ENCODE measurements at regions of chr9 and their contacts with region 1.

Region 1: GRCh38 chr9:121545875-121546423 is 46.3 kb upstream of the GGTA1 start:
- DNase-seq: peak; percentile 95
- H3K27ac ChIP-seq: no peak overlapping the region; the same call in 1 of the 2 replicates
- CTCF ChIP-seq: peak; percentile 100

Region 2: DNA sequence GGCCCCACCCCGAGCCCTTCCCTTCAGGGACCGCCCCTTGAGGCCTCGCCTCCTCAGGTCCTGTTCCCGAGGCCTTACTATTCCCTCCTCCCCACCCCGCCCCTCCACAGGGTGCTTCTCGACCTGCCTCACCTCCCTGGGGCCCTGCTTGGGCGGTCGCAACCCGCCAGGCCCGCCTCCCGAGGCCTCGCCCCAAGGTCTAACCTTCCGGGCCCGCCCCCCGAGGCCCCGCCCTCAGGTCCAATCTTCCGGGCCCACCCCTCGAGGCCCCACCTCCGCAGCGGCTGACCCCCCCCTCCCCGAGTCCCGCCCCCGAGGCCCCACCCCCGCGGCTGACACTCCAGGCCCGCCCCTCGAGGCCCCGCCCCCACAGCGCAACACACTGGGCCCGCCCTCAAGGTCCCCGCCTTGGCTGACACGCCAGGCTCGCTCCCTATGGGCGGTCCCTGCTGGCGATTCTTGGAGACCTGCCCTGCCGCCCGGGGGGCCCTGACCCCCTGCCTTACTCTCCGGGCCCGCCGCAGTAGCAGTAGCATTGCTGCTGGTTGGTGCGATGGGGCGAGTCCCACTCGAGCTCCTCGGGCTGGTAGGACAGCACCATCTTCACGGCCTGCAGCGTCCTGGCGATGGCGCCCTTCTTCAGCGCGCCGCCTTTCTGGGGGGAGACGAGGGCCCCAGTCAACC is 677.1 kb before region 1 on chr9:
- CTCF ChIA-PET with region 1: no interaction called
- POLR2A ChIA-PET with region 1: no interaction called
- DNase-seq: peak; percentile 99
- H3K27ac ChIP-seq: peak overlapping the region; percentile 84
- CTCF ChIP-seq: peak; percentile 69

Region 3: DNA sequence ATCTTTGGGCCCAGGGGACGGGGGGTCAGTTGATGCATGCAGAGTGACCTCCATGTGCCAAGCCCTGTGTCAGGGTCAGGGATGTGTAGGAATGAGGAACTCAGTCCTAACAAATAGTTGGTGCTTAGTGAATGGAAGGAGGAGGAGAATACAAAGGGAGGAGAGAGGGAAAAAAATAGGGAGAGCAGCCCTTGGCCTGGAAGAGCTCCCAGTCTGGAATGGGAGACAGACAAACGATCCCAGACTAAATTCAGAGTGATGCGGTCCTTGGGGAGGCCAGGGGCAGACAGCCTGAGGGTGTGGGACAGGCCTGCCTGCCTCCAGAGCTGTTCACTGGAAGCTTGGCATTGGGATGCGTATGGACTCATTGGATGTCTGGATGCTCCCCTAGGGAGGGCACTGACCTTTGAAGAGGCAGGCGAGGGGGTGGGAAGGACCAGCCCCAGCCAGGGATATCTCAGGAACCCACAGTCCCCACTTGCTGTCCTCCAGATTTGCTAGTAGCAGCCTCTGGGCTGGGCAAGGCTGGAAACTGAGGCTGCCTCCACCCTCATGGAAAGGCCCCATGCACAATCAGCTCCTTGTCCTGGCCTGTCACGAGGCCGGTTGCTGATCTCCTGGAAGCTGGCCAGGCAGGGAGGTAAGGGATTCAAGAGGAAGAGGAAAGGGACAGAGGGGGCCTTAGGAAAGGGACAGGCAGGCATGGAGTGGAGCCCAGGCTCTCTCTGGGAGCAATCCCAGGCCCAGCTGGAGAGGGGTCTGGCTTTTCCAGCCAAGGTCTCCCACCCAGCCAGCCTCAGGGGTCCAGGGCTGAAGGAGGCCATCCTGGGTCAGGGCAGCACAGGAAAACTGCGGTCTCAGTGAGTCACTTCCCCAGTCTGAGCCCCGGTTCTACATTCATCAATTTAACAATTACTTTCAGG is 22.7 kb after region 1 on chr9:
- CTCF ChIA-PET with region 1: interaction called, 26 read pairs
- POLR2A ChIA-PET with region 1: no interaction called
- DNase-seq: peak; percentile 55
- H3K27ac ChIP-seq: peak overlapping the region; percentile 53
- CTCF ChIP-seq: no peak

Region 4: GRCh38 chr9:121581786-121582600 is 36.0 kb after region 1 on chr9:
- CTCF ChIA-PET with region 1: interaction called, 12 read pairs
- POLR2A ChIA-PET with region 1: no interaction called
- DNase-seq: no peak
- H3K27ac ChIP-seq: no peak overlapping the region
- CTCF ChIP-seq: no peak

Region 5: GRCh38 chr9:121609845-121610570 is 64.1 kb after region 1 on chr9:
- CTCF ChIA-PET with region 1: interaction called, 12 read pairs
- POLR2A ChIA-PET with region 1: no interaction called
- DNase-seq: peak; percentile 100
- H3K27ac ChIP-seq: peak overlapping the region; percentile 90
- CTCF ChIP-seq: no peak

Region 6: DNA sequence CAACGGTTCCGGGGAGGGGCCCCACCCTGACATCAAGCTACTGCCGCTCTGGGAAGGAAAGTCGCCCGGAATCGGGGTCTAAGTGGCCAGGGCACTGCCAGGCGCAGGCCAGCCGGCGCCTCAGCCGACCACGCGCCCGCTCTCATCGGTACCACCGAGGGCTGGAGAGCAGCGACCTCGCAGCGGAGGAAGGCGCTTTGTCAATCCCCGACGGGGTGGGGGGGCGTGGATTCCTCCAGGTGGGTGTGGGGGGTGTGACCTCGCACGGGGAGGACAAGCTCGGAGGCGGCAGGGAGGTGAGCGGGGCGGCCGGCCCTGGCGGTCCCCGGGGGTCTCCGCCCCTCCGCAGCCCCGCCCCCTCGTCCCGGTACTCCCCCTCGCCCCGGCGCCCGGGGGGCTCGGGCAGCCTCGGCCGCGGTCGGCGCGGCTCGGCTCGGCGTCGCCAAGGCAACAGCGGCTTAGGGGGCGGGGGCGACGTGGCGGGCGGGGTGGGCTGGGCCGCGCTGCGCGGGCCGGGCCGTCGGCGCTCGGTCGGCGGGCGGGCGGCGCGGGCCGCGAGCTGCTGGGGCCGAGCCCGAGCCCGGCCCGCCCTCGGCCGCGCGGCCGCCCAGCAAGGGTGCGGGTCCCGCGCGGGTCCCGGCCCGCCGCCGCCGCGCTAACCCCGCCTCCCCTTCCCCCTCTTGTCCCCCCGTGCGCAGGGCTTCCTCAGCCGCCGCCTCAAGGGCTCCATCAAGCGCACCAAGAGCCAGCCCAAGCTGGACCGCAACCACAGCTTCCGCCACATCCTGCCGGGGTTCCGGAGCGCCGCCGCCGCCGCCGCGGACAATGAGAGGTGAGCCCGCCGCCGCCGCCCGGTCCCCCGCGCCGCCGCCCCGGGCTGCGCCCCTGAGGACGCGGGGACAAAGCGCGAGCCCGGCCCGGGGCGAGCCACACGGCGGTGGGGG is 152.9 kb after region 1 on chr9:
- CTCF ChIA-PET with region 1: interaction called, 13 read pairs
- POLR2A ChIA-PET with region 1: no interaction called
- DNase-seq: peak; percentile 69
- H3K27ac ChIP-seq: peak overlapping the region; percentile 98
- CTCF ChIP-seq: no peak

Measured in RWPE1 (cell line).